GM10248 (cell line): ENCODE measurements at regions of chr7 and their contacts with region 1.

Region 1: DNA sequence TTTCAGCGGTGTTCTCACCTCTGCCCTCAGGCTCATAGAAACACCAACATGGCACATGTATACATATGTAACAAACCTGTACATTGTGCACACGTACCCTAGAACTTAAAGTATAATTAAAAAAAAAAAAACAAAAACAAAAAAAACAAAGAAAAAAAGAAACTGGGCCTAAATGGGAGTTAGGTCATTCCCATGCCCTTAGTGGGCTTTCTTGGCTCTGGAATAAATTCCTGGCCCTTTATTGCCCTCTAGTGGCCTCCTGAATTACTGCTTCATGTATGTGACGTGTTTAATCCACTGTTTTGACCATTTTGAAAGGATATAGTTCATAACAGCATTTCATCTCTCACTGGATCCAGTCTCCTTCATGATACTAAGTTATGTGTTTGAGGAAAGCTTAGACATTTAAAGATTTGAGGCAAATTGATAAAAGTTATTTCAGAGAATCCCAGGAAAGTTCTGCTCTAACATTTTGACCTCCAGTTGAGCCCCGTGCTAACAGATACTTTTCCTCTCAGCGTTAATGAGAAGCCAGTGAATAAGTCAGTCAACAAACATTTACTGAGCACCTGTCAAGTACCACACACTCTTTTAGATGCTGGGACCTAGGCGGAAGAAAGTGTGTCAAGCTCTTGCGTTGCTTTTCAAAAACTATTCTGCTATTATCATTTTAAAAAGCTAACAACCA is 54.7 kb upstream of the SYPL1 start:
- DNase-seq: no peak
- CTCF ChIP-seq: peak; percentile 79

Region 2: DNA sequence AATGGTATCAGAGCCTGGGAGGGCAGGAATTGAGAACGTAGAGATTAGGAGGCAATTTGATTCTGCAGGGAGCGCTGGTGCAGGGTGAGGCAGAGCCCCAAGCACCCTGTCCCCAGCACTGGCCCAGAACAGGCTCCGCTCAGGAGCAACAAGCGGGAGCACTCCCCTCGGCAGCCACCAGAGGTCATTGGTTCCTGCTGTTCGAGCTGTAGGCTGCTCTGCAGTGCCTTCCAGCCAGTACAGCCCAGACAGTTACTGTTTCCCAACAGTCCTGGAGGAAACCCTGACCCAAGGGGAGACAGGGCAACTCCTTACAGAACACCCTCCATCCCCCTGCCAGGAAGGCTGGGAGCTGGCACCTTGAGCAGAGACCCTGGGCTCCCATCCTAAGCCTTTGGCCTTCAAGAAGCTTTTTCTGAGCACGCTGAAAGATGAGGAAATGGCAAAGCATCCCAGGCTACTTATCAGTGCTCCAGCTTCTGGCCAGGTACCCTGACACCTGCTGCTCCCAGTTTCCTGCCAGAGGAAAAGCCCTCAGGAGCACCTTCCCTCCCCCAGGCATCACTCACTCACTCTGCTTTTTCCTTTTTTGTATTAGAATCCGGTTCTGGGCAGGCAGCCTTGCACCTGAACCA is 514.3 kb before region 1 on chr7:
- CTCF ChIA-PET with region 1: interaction called, 10 read pairs
- POLR2A ChIA-PET with region 1: no interaction called
- DNase-seq: peak; percentile 78
- CTCF ChIP-seq: peak; percentile 75

Region 3: GRCh38 chr7:106056513-106057203 is 110.1 kb before region 1 on chr7:
- CTCF ChIA-PET with region 1: interaction called, 47 read pairs
- POLR2A ChIA-PET with region 1: no interaction called
- DNase-seq: peak; percentile 82
- CTCF ChIP-seq: peak; percentile 94

Region 4: DNA sequence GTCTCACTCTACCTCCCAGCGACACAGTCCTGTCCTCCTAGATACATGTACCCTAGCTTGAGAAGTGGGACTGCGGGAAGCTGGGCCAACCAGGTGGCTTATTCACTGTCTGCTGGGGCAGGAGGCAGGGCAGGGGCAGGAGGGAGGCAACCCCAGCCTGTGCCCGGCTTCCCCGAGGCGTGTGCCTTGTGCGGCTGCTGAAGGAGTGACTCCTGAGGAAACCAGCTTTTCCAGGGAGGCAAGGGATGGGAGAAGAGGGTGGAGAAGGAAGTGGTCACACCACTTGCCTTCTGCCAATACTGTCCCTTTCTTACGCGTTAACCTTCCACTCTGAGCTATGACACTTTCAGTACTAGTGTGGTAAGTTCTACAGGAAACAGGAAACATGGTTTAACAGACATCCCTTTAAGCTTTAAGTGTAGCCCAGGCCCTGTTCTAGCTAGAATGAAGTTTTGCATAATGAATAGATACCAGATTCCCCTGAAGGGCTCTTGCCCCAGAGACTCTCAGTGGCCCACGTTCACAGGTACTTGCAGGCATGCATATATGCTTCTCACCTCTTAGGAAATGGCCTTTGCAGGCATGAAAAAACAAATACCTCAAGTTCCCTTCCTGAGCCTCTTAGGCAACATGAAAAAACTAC is 95.3 kb before region 1 on chr7:
- CTCF ChIA-PET with region 1: interaction called, 14 read pairs
- POLR2A ChIA-PET with region 1: no interaction called
- DNase-seq: peak; percentile 81
- CTCF ChIP-seq: no peak

Region 5: GRCh38 chr7:106461993-106462859 is 295.4 kb after region 1 on chr7:
- CTCF ChIA-PET with region 1: interaction called, 11 read pairs
- POLR2A ChIA-PET with region 1: no interaction called
- DNase-seq: peak; percentile 27
- CTCF ChIP-seq: peak; percentile 52